Dorsolateral prefrontal cortex (tissue), 120 donors: ENCODE measurements at regions of chr2 and their contacts with region 1.

Region 1: GRCh38 chr2:176317199-176317598 is 48.0 kb downstream of the MTX2 start:
- DNase-seq: no peak
- H3K4me3 ChIP-seq: no peak overlapping the region
- H3K27ac ChIP-seq: peak overlapping the region in 1 of 59 donors; percentile 0
- H3K27me3 ChIP-seq: no peaks in the 10 kb centered on the region
- CTCF ChIP-seq: no peak

Region 2: DNA sequence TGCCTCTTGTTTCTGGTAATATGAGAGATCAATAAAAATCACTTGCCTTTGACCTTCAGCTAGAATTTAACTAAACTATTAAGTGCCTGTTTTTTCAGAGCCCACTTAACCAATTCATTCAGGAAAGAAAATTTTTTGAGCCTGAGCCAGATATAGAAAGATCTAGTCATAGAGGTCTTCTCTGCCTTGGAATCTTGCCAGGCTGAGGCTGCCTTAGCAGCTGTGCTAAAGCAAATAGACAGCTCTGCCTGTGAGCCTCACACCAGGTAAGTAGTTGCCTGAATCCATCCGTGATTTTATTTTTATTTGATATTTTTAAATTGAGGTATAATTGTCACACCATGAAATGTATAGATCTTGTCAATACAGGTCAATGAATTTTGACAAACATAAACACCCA is 260.8 kb before region 1 on chr2:
- intact Hi-C with region 1: no loop called
- DNase-seq: no peak
- H3K4me3 ChIP-seq: no peak overlapping the region
- H3K27ac ChIP-seq: no peak overlapping the region
- H3K27me3 ChIP-seq: peaks cover 0 to 63% (median 14%) of the 10 kb centered on the region in 45 donors
- CTCF ChIP-seq: no peak

Region 3: GRCh38 chr2:176187899-176188773 is 129.1 kb before region 1 on chr2 and contains the start of gene HOXD1:
- intact Hi-C with region 1: loop called in 1 of 2 experiments (anchors 10 kb)
- DNase-seq: peak in 8 of 10 donors; percentile 55 to 82 (median 70)
- H3K4me3 ChIP-seq: peak within 1 kb of the TSS; percentile 34 to 79 (median 61)
- H3K27ac ChIP-seq: peak within 1 kb of the TSS in 44 of 59 donors; percentile 9 to 90 (median 72)
- H3K27me3 ChIP-seq: peaks cover 16 to 93% (median 79%) of the 10 kb centered on the region in 45 donors
- CTCF ChIP-seq: peak in 1 of 56 donors; percentile 2
- total RNA-seq, gene HOXD1: 0.23 to 9.3 (median 1.6) TPM in 113 of 120 experiments, not detected in the others

Region 4: GRCh38 chr2:176242276-176242675 is 74.9 kb before region 1 on chr2:
- intact Hi-C with region 1: no loop called
- DNase-seq: peak in 2 of 10 donors; percentile 22 to 29
- H3K4me3 ChIP-seq: no peak overlapping the region
- H3K27ac ChIP-seq: peak overlapping the region in 24 of 59 donors; percentile 1 to 69 (median 31)
- H3K27me3 ChIP-seq: peaks cover 0 to 12% (median 0%) of the 10 kb centered on the region in 45 donors
- CTCF ChIP-seq: no peak

Region 5: GRCh38 chr2:176626796-176627195 is 309.6 kb after region 1 on chr2:
- intact Hi-C with region 1: no loop called
- DNase-seq: no peak
- H3K4me3 ChIP-seq: no peak overlapping the region
- H3K27ac ChIP-seq: no peak overlapping the region
- H3K27me3 ChIP-seq: peaks cover 0 to 37% (median 6%) of the 10 kb centered on the region in 45 donors
- CTCF ChIP-seq: no peak